IMR-90 (cell line): ENCODE measurements at regions of chr3 and their contacts with region 1.

Region 1: DNA sequence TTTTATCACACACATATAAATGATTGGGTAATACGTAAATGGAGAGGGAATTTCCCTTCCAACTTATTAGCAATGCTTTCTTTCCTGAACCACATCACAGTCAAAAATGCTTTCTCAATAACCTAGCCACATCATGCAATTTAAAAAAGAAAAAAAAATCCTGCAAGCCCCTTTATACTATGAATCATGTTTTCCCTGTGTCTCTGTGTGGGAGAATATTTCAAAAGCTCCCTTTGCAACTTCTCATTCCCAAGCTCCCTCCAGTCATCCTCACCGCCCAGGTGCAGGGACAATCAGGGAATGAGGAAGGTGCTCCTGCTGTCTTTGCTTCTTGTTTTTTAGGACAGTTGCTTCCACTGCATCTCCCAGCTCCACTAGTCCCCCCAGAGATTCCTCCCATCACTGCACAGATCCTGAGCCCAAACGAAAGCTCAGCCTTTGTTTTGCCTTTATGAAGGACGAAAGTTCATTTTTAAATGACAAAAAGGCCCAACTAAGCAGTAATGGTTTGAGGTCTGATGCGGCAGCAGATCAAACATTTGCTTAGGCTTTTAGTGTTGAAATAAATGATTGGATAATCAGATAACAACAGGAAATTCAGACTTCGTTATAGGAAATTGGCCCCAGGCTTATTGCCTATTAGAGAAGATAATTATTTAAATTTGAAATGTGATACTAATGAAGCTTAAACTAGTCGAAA is 47.8 kb upstream of the ADGRG7 start:
- DNase-seq: peak; percentile 86
- ATAC-seq: peak; percentile 48
- H3K4me3 ChIP-seq: no peak overlapping the region
- H3K27ac ChIP-seq: no peak overlapping the region
- H3K4me1 ChIP-seq: peaks cover 11% of the 10 kb centered on the region
- H3K27me3 ChIP-seq: no peaks in the 10 kb centered on the region
- CTCF ChIP-seq: no peak
- POLR2A ChIP-seq: no peak
- RAD21 ChIP-seq: no peak

Region 2: GRCh38 chr3:100577382-100578002 is 15.9 kb after region 1 on chr3:
- CTCF ChIA-PET with region 1: interaction called, 15 read pairs
- POLR2A ChIA-PET with region 1: no interaction called
- dilution Hi-C with region 1: no loop called
- in situ Hi-C with region 1: no loop called
- intact Hi-C with region 1: no loop called
- DNase-seq: no peak
- ATAC-seq: no peak
- H3K4me3 ChIP-seq: no peak overlapping the region
- H3K27ac ChIP-seq: no peak overlapping the region
- H3K4me1 ChIP-seq: peaks cover 2% of the 10 kb centered on the region; the same call in 1 of the 2 replicates
- H3K27me3 ChIP-seq: no peaks in the 10 kb centered on the region
- CTCF ChIP-seq: no peak
- POLR2A ChIP-seq: no peak
- RAD21 ChIP-seq: no peak

Region 3: GRCh38 chr3:101036213-101036618 is 474.6 kb after region 1 on chr3:
- CTCF ChIA-PET with region 1: no interaction called
- POLR2A ChIA-PET with region 1: no interaction called
- dilution Hi-C with region 1: no loop called
- in situ Hi-C with region 1: no loop called
- intact Hi-C with region 1: no loop called
- DNase-seq: peak; percentile 96
- ATAC-seq: peak; percentile 95
- H3K4me3 ChIP-seq: no peak overlapping the region
- H3K27ac ChIP-seq: peak overlapping the region; percentile 96
- H3K4me1 ChIP-seq: peaks cover 9% of the 10 kb centered on the region
- H3K27me3 ChIP-seq: no peaks in the 10 kb centered on the region
- CTCF ChIP-seq: no peak
- POLR2A ChIP-seq: no peak
- RAD21 ChIP-seq: 0 out of 2 replicates have a peak, but pooled peaks have one; percentile 2